ENCODE measurements at regions of chr4 and their contacts with region 1.

Region 1: DNA sequence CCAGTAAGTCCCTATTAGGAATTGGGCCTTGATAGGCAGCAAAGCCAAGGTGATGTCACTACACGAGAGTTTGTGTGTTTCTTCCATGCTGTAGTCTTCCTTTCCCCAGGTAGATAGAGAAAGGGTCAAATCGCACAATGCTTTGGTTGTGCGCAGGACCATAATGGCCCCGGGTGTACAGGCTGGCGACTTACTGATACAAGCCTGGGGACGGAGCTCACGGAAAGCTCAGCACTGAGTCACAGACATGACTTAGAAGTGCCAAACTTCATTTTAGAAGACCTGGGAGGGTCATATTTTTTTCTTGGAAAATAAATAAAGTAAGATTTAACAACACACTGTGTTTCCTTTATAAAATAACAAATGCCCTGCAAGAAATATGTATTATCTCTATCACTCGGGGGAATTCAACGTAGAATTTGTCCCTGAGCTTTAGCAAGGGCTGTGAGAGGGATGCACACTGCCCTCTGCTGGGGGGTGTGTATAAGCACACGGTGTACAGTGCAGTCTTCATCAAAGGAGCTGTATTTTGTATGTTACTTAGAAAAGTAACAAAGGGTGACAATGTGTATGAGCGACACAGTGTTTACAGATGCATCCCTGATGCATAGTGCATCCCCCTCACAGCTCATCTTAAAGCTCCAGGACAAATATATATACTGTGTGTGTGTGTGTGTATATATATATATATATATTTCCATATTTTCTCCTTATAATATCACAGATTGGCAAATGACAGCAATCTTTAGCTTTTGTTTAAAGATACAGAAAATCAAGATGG is 254.5 kb upstream of the VEGFC start:
- DNase-seq: peak in 2 of 3 donors; percentile 20 to 48
- ATAC-seq: peak; percentile 77
- H3K4me3 ChIP-seq: no peak overlapping the region
- H3K4me1 ChIP-seq: no peaks in the 10 kb centered on the region
- CTCF ChIP-seq: peak; percentile 51

Region 2: GRCh38 chr4:176377780-176378179 is 669.5 kb before region 1 on chr4:
- intact Hi-C with region 1: loop called (anchors 10 kb)
- DNase-seq: no peak
- ATAC-seq: no peak
- H3K4me3 ChIP-seq: no peak overlapping the region
- H3K4me1 ChIP-seq: no peaks in the 10 kb centered on the region
- CTCF ChIP-seq: no peak

Measured in mucosa of descending colon (tissue), 3 donors.